IMR-90 (cell line): ENCODE measurements at regions of chrX and their contacts with region 1.

Region 1: GRCh38 chrX:78997870-78998558 is 52.8 kb downstream of the P2RY10 start:
- DNase-seq: no peak
- ATAC-seq: no peak
- H3K4me3 ChIP-seq: no peak overlapping the region
- H3K27ac ChIP-seq: no peak overlapping the region
- H3K4me1 ChIP-seq: no peaks in the 10 kb centered on the region
- H3K27me3 ChIP-seq: no peaks in the 10 kb centered on the region
- CTCF ChIP-seq: no peak
- POLR2A ChIP-seq: no peak
- RAD21 ChIP-seq: no peak

Region 2: DNA sequence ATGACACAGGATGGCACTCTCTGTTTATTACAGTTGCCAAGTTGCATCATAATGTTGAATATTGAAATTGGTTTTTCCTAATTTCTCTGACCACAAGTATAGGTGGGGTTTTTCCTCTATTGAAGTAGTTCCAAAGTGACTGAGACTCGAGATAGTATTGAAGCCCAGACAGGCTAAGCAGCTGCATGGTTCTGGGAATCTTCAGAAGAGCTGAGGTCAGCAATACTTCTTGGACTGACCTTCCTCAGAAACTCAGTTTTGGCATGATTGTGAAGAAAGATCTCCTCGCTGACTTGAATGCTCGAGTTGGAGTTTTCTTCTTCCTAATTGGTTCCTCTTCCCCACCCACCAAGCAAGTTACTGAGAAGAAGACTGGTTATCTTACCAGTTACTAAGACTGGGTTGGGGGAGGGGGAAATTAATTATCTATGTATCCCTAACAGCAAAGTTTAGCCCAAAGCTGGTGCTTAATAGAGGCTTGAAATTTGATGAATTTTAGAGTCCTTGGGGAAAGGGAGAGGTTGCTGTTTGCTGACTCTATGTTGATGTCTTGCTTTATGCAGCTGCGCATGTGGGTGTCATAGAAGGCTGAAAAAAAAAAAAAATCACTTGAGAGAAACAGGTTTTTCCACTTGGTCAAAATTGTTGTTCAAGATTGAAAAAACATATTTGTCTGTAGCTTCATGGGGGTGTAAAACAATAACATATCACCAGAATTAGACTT is 38.3 kb after region 1 on chrX:
- CTCF ChIA-PET with region 1: no interaction called
- POLR2A ChIA-PET with region 1: no interaction called
- dilution Hi-C with region 1: no loop called
- in situ Hi-C with region 1: no loop called
- intact Hi-C with region 1: loop called (anchors 2 kb)
- DNase-seq: no peak
- ATAC-seq: no peak
- H3K4me3 ChIP-seq: no peak overlapping the region
- H3K27ac ChIP-seq: no peak overlapping the region
- H3K4me1 ChIP-seq: no peaks in the 10 kb centered on the region
- H3K27me3 ChIP-seq: no peaks in the 10 kb centered on the region
- CTCF ChIP-seq: no peak
- POLR2A ChIP-seq: no peak
- RAD21 ChIP-seq: no peak